ENCODE measurements at regions of chr11 and their contacts with region 1.

Region 1: GRCh38 chr11:126194121-126194543 is 17.3 kb downstream of the RPUSD4 start:
- DNase-seq: no peak
- ATAC-seq: peak; percentile 71

Region 2: DNA sequence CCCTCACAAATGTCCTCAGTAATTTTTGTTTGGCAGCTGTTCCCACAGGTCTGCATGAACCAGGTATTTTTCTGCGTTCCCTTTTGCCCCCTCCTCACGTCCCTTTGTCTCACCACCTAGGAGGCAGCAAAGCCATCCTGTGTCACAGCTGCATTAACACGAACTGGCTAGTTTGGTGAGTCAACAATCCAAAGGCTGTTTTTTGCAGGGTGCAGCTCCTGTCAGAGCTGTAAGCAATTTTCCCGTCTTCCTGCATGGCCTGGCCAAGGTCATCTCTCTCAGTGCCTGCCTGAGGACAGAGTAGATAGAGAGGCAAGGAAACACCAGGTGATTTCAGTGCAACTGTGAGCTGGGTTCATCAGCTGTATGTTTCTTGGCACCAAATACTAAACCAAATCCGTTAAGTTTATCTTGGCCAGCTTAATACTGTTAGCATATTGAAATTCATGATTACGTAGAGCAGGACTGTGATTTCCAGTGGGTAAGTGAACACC is 268.8 kb before region 1 on chr11:
- intact Hi-C with region 1: loop called (anchors 5 kb)
- DNase-seq: no peak
- ATAC-seq: no peak

Region 3: DNA sequence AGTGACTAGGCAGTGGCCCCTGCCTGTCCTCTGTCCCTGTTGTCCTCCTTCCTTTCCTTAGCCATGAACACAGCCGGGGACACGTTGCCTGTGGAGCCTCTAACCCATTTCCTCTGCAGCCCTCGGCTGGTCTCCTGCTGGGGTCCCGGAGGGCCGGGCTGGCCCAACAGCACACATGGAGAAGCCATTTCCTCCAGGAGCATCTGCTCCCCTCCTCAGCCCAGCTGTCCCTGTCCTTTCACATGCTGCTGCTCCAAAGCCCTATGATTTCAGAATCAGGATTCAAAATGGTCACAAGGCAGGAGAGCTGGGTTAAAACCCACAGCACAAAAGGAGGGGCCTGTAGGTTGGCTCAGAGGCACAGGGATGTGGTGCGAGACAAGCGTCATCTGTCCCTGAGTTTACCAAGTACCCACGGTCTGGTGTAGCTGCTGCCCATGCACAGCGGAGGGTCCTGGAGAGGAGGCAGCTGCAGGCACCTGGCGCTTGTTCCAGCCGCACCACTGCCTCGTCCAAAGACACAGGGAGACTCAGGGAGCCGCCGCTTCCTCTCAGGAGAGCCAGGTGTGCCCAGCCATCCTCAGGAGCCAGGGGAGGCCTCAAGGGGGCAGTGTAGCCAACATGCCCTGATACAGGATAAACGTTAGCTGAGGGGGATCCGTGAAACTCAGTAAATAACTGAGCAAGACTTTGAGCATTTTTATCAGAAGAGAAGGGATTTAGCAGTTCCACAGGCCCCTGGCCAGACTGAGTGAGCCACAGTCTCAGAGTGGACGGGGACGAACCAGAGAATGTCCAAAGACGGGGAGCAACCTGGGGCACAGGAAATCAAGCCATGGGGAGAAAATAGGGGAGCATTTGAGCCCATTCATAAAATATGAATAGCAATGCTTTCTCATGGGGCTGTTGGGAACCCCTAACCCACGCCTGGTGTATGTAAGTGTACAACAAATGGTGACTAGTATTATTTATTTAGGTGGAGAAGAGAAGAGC is 252.2 kb before region 1 on chr11:
- intact Hi-C with region 1: loop called (anchors 5 kb)
- DNase-seq: peak; percentile 72
- ATAC-seq: peak; percentile 84

Measured in left ventricle myocardium superior (tissue), 1 donor.